BJ (cell line): ENCODE measurements at regions of chr6 and their contacts with region 1.

Region 1: GRCh38 chr6:54980511-54981275 is 134.1 kb downstream of the FAM83B start:
- DNase-seq: peak; percentile 77
- H3K4me3 ChIP-seq: no peak overlapping the region
- H3K27me3 ChIP-seq: no peaks in the 10 kb centered on the region
- CTCF ChIP-seq: no peak

Region 2: DNA sequence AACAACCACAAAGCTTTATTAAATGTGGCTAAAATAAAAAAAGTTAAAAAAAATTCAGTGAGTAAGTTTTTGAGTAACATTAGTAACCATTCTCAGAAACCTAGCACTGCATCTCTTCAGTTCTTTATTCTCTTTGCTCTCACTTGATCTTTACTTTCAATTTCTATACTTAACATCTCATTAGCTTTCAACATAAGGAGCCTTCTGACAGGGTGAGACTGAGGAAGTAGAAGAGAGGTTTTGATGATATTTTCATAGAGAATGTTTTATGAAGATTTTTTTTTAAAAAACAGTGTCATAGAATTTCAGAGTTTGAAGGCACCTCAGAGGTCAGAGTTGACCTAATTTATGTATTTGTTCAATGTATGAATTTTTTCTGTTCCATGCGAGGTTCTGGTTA is 73.3 kb before region 1 on chr6:
- CTCF ChIA-PET with region 1: no interaction called
- POLR2A ChIA-PET with region 1: interaction called, 18 read pairs
- DNase-seq: no peak
- H3K4me3 ChIP-seq: no peak overlapping the region
- H3K27me3 ChIP-seq: no peaks in the 10 kb centered on the region
- CTCF ChIP-seq: no peak

Region 3: GRCh38 chr6:54958446-54958845 is 22.2 kb before region 1 on chr6:
- CTCF ChIA-PET with region 1: no interaction called
- POLR2A ChIA-PET with region 1: no interaction called
- DNase-seq: no peak
- H3K4me3 ChIP-seq: no peak overlapping the region
- H3K27me3 ChIP-seq: no peaks in the 10 kb centered on the region
- CTCF ChIP-seq: no peak